ENCODE measurements at regions of chr17 and their contacts with region 1.

Region 1: DNA sequence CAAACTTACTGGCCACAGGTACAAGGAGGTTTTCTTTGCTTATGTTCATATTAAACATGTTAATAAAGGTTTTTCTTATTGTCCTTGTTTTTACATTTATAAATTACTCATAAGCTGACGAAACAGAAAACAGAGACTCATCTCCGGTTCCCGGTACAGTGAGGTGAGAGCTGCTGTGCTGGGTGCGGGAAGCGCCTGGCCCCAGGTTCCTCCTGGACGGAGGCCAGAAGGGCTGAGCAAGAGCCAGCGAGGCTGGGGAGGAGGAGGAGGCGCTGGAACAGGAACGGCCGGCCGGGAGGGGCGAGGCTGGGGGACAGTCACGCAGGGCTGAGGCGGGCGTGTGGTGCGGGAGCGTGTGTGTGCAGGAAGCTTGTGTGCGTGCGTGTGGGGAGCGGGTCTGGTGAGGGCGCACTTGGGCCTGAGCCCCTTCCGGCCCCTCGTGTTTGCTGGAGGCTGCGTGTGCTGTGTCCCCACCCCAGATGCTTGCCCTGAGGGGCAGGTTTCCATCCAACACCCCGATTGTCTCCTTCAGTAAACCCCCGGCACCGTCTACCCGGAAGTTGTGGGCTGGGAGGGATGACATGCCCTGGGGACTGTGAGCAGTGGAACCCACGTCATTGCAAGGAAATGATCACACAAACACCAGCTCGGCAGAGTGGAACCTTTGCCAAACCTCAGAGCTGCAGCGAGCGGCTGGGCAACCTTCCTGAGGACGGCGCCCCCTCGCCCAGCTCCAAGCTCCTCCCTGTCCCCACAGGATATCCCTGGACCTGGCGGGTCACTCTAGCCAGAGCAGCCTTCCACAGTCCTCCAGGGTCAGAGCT is 19.5 kb downstream of the CD7 start:
- DNase-seq: peak; percentile 94 to 99 (median 95)
- H3K4me3 ChIP-seq: peak overlapping the region; percentile 21 to 81
- H3K4me3 Mint-ChIP-seq: peak overlapping the region; percentile 96 to 98 (median 97)
- H3K27ac ChIP-seq: peak overlapping the region; percentile 100
- H3K27ac Mint-ChIP-seq: peak overlapping the region; percentile 100
- H3K4me1 ChIP-seq: peaks cover 68% of the 10 kb centered on the region
- H3K4me1 Mint-ChIP-seq: peaks cover 46 to 91% (median 72%) of the 10 kb centered on the region in 4 donors
- H3K27me3 ChIP-seq: no peaks in the 10 kb centered on the region
- H3K27me3 Mint-ChIP-seq: no peaks in the 10 kb centered on the region

Region 2: GRCh38 chr17:82205719-82206508 is 92.0 kb before region 1 on chr17:
- CTCF ChIA-PET with region 1: interaction called, 24 read pairs
- POLR2A ChIA-PET with region 1: interaction called, 26 read pairs
- intact Hi-C with region 1: loop called (anchors 5 kb)
- DNase-seq: peak; percentile 84 to 87 (median 86)
- H3K4me3 ChIP-seq: no peak overlapping the region
- H3K4me3 Mint-ChIP-seq: peak overlapping the region in 7 of 8 donors; percentile 39 to 81 (median 54)
- H3K27ac ChIP-seq: peak overlapping the region; percentile 61
- H3K27ac Mint-ChIP-seq: peak overlapping the region; percentile 96 to 99 (median 97)
- H3K4me1 ChIP-seq: peaks cover 26% of the 10 kb centered on the region
- H3K4me1 Mint-ChIP-seq: peaks cover 20 to 46% (median 33%) of the 10 kb centered on the region in 4 donors
- H3K27me3 ChIP-seq: no peaks in the 10 kb centered on the region
- H3K27me3 Mint-ChIP-seq: no peaks in the 10 kb centered on the region

Region 3: GRCh38 chr17:82230627-82231311 is 67.2 kb before region 1 on chr17:
- CTCF ChIA-PET with region 1: interaction called, 28 read pairs
- POLR2A ChIA-PET with region 1: interaction called, 47 read pairs
- intact Hi-C with region 1: loop called (anchors 2 kb)
- DNase-seq: peak; percentile 42 to 76 (median 48)
- H3K4me3 ChIP-seq: peak overlapping the region in 1 of 2 donors; percentile 32
- H3K4me3 Mint-ChIP-seq: peak overlapping the region in 5 of 8 donors; percentile 17 to 84 (median 77)
- H3K27ac ChIP-seq: peak overlapping the region; percentile 38
- H3K27ac Mint-ChIP-seq: no peak overlapping the region
- H3K4me1 ChIP-seq: peaks cover 42% of the 10 kb centered on the region
- H3K4me1 Mint-ChIP-seq: peaks cover 2 to 37% (median 15%) of the 10 kb centered on the region in 4 donors
- H3K27me3 ChIP-seq: no peaks in the 10 kb centered on the region
- H3K27me3 Mint-ChIP-seq: no peaks in the 10 kb centered on the region

Region 4: DNA sequence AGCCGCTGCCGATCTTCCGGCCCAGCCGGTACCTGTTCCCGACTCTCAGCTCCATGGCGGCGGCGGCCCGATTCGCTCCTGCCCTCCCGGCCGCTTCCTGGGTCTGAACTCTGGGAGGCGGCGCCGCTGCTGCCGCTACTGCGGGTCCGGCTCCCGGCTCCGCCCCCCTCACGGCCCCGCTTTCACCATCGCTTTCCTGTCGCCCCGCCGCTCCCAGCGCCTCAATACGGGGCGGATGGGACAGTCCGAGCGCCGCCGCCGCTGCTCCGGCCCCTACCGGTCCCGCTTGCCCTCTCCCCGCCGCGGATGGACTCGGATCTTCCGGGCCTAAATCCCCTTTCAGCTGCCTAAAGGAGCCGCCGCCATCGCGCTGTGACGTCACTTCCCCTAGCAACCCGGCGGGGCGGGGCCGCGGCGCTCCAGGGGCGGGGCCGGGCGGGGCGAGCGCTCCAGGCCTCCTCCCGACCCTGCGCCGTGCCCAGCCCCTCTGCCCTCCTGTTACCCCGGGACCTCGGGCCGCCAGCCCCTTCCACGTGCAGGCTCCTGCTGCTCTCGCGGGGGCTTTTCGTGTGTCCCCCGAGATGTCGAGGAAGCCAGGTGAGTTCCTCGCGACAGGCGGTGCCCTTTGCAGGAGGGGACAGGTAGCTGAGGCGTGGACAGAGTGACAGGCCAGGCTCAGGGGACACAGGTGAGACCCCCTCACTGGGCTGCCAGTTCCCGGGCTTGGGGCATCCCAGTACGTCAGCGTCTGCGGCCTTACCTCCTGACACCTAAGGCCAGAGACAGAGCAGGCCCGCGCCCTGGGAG is 24.4 kb before region 1 on chr17 and contains the start of gene CSNK1D:
- CTCF ChIA-PET with region 1: interaction called, 4 read pairs
- POLR2A ChIA-PET with region 1: interaction called, 56 read pairs
- intact Hi-C with region 1: loop called (anchors 1 kb)
- DNase-seq: peak; percentile 88 to 94 (median 90)
- H3K4me3 ChIP-seq: peak within 1 kb of the TSS; percentile 47 to 76
- H3K4me3 Mint-ChIP-seq: peak within 1 kb of the TSS; percentile 91 to 96 (median 94)
- H3K27ac ChIP-seq: peak within 1 kb of the TSS; percentile 80
- H3K27ac Mint-ChIP-seq: peak within 1 kb of the TSS; percentile 92 to 100 (median 98)
- H3K4me1 ChIP-seq: peaks cover 50% of the 10 kb centered on the region
- H3K4me1 Mint-ChIP-seq: peaks cover 31 to 53% (median 40%) of the 10 kb centered on the region in 4 donors
- H3K27me3 ChIP-seq: no peaks in the 10 kb centered on the region
- H3K27me3 Mint-ChIP-seq: no peaks in the 10 kb centered on the region
- total RNA-seq, gene CSNK1D: 182 TPM

Region 5: GRCh38 chr17:82315703-82316358 is 17.9 kb after region 1 on chr17:
- CTCF ChIA-PET with region 1: interaction called, 72 read pairs
- POLR2A ChIA-PET with region 1: interaction called, 172 read pairs
- intact Hi-C with region 1: loop called (anchors 1 kb)
- DNase-seq: peak; percentile 48 to 64 (median 51)
- H3K4me3 ChIP-seq: peak overlapping the region; percentile 51 to 88
- H3K4me3 Mint-ChIP-seq: peak overlapping the region in 7 of 8 donors; percentile 89 to 94 (median 93)
- H3K27ac ChIP-seq: peak overlapping the region; percentile 65
- H3K27ac Mint-ChIP-seq: peak overlapping the region in 6 of 7 donors; percentile 88 to 96 (median 93)
- H3K4me1 ChIP-seq: peaks cover 29% of the 10 kb centered on the region
- H3K4me1 Mint-ChIP-seq: peaks cover 7 to 26% (median 15%) of the 10 kb centered on the region in 4 donors
- H3K27me3 ChIP-seq: no peaks in the 10 kb centered on the region
- H3K27me3 Mint-ChIP-seq: no peaks in the 10 kb centered on the region

Region 6: DNA sequence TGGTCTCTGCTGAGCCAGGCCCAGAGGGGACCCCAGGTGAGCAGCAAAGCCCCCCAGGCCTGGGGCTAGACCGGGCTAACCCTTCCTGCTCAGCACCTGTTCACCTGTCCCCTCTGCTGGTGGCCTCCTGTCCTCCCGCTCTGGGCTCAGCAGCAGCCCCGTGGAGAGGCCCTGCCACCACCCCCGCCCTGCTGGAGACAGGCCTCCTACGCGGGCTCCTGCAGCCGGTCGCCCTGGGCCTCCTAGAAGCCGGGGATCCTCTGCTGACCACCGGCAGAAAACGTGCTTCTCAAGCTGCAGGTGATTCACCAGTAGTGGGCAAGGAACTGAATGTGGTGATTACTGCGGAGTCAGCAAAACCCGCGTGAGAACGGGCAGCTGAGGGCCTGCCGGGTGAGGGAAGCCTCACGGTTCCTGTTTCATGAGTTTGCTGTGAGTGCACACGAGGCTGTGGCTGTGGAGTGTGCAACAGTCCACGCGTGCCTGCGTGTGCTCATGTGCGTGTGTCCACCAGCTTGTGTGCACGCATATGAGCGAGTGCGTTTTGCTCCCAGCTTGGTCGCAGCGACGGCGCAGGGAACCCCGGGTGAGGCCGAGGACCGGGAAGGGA is 34.8 kb after region 1 on chr17:
- CTCF ChIA-PET with region 1: no interaction called
- POLR2A ChIA-PET with region 1: interaction called, 37 read pairs
- intact Hi-C with region 1: no loop called
- DNase-seq: peak in 3 of 5 donors; percentile 20 to 41 (median 26)
- H3K4me3 ChIP-seq: peak overlapping the region in 1 of 2 donors; percentile 54
- H3K4me3 Mint-ChIP-seq: peak overlapping the region; percentile 86 to 91 (median 88)
- H3K27ac ChIP-seq: no peak overlapping the region
- H3K27ac Mint-ChIP-seq: peak overlapping the region in 6 of 7 donors; percentile 63 to 94 (median 74)
- H3K4me1 ChIP-seq: peaks cover 24% of the 10 kb centered on the region
- H3K4me1 Mint-ChIP-seq: peaks cover 13 to 26% (median 19%) of the 10 kb centered on the region in 4 donors
- H3K27me3 ChIP-seq: no peaks in the 10 kb centered on the region
- H3K27me3 Mint-ChIP-seq: peaks cover 0 to 2% of the 10 kb centered on the region in 2 donors

Measured in CD4-positive, alpha-beta memory T cell (primary cell).